ENCODE measurements at regions of chr15 and their contacts with region 1.

Region 1: GRCh38 chr15:49235446-49236124 is 65.5 kb downstream of the GALK2 start:
- DNase-seq: no peak
- ATAC-seq: peak; percentile 65
- H3K4me3 Mint-ChIP-seq: no peak overlapping the region
- H3K27ac Mint-ChIP-seq: no peak overlapping the region
- H3K4me1 Mint-ChIP-seq: peaks cover 11% of the 10 kb centered on the region
- H3K27me3 Mint-ChIP-seq: no peaks in the 10 kb centered on the region
- CTCF ChIP-seq: no peak

Region 2: DNA sequence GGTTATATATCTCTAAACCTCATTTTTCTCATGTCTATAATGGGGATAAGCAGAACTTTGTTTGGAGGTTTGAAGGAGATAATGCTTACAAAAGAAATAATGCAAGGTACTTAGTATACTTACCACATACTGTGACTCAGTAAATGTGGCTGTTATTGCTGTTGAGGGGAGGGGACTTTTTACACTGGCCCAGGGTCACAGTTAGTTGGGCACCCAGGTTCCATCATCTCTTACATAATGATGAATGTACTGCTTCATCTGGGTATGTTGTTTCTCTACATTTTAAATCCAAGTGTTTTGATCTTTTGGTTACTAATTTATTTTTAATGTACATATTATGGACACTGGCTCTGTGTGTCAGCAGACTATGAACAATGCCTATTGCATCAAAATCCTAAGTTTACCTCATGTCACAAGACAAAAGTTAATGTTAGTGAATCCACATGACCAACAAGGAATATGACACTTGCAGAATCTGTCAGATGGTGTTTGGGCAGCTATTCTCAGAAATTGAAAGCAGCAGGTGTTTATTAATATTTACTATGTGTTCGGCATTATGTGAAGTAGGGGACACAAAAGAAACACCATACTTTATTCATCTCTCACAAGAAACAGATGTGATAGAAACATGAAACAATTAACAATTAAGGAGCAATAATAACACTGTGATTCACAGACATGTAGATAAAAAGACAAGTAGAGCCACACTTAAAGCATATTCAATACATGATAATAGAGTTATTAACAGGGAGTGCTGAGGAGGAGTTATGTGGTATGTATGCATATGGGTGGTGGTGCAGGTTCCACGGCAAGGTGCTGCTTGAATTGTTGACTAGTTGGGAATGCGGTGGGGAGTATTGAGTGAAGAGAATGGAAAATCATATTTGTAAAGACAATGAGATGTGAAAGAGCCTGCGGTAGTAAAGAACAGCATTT is 44.2 kb after region 1 on chr15:
- CTCF ChIA-PET with region 1: no interaction called
- POLR2A ChIA-PET with region 1: no interaction called
- intact Hi-C with region 1: no loop called
- DNase-seq: no peak
- ATAC-seq: no peak
- H3K4me3 Mint-ChIP-seq: no peak overlapping the region
- H3K27ac Mint-ChIP-seq: no peak overlapping the region
- H3K4me1 Mint-ChIP-seq: no peaks in the 10 kb centered on the region
- H3K27me3 Mint-ChIP-seq: no peaks in the 10 kb centered on the region
- CTCF ChIP-seq: no peak

Region 3: DNA sequence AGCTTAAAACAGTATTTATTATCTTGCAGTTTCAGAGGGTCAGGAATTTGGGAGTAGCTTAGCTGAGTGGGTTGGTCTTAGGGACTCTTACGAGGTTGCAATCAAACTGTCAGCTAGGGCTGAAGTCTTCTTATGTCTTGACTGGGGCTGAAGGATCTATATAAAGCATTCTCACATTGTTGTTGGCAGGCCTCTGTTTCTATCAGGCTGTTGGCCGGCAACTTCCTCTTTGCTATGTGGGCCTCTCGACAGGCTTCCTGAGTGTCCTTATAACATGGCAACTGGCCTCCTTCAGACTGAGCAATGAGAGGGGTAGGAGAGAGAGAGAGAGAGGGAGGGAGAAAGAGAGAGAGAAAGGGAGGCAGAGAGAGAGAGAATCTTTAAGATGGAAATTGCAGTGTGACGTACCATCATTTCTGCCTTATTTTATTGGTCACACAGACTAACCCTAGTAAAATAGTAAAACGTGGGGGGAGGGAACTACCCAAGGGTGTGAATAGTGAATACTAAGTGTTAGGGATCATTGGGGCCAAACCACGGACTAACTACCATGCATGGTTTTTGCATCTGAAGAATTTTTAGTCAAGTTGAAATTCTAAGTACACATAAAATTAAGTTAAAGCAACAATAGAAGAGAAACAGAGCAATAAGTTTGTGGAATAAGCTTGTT is 203.5 kb after region 1 on chr15:
- CTCF ChIA-PET with region 1: no interaction called
- POLR2A ChIA-PET with region 1: no interaction called
- intact Hi-C with region 1: no loop called
- DNase-seq: no peak
- ATAC-seq: no peak
- H3K4me3 Mint-ChIP-seq: no peak overlapping the region
- H3K27ac Mint-ChIP-seq: no peak overlapping the region
- H3K4me1 Mint-ChIP-seq: peaks cover 15% of the 10 kb centered on the region
- H3K27me3 Mint-ChIP-seq: no peaks in the 10 kb centered on the region
- CTCF ChIP-seq: no peak

Region 4: DNA sequence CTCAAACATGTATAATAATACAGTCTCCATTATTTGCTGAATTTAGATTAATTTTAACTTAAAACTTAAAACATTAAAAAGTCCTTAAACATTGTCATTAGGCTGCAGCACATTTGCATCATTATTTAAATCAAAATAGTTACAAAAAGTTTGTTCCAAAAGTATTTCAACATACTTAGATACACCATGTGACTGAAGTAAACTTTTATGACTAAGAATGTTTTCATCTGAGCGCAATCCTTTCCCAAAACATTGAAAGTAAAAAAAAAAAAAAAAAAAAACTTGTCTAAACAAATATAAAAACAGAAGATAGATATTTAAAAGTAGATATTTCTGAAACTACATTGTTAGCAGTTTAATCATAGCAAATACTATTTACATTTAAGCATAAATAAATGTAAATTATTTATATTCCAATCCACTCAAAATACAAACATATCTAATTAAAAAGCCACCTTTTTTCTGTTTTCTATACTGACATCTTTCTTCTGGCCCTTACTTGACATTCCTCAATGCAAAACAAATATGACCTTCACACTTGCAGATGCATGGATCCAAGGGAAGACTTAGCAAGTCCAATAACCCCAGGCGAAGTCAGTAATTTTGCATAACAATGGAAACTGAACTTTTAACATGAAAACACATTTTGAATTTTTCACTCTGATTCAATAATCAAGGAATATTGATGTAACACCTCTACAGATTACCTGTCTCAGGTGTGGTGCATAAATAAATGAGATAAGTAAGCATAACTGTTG is 374.8 kb after region 1 on chr15:
- CTCF ChIA-PET with region 1: no interaction called
- POLR2A ChIA-PET with region 1: no interaction called
- intact Hi-C with region 1: loop called (anchors 5 kb)
- DNase-seq: no peak
- ATAC-seq: no peak
- H3K4me3 Mint-ChIP-seq: no peak overlapping the region
- H3K27ac Mint-ChIP-seq: no peak overlapping the region
- H3K4me1 Mint-ChIP-seq: no peaks in the 10 kb centered on the region
- H3K27me3 Mint-ChIP-seq: no peaks in the 10 kb centered on the region
- CTCF ChIP-seq: no peak

Region 5: GRCh38 chr15:50003786-50004334 is 768.3 kb after region 1 on chr15:
- CTCF ChIA-PET with region 1: interaction called, 15 read pairs
- POLR2A ChIA-PET with region 1: no interaction called
- intact Hi-C with region 1: no loop called
- DNase-seq: peak; percentile 20
- ATAC-seq: peak; percentile 88
- H3K4me3 Mint-ChIP-seq: no peak overlapping the region
- H3K27ac Mint-ChIP-seq: no peak overlapping the region
- H3K4me1 Mint-ChIP-seq: peaks cover 11% of the 10 kb centered on the region
- H3K27me3 Mint-ChIP-seq: no peaks in the 10 kb centered on the region
- CTCF ChIP-seq: no peak

Region 6: DNA sequence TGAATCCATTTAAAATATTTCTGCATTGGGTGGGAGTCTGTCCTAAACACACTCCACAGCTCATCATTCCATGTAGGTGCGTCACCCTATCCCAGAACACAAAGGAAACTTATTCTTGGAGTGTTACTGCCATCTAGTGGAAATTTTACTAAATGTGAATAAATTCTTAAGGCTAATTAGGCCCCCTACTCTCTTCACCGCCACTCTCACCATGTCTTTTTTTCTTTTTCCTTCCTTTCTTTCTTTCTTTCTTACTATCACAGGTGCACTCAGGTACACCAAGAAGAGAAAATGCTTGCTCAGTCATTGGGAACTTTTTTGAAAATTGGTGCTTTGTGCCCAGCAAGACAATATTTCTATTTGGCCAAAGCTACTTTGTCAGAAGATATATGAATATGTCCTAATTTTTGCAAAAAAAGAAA is 909.9 kb after region 1 on chr15:
- CTCF ChIA-PET with region 1: interaction called, 4 read pairs
- POLR2A ChIA-PET with region 1: no interaction called
- intact Hi-C with region 1: loop called (anchors 1 kb)
- DNase-seq: no peak
- ATAC-seq: no peak
- H3K4me3 Mint-ChIP-seq: no peak overlapping the region
- H3K27ac Mint-ChIP-seq: no peak overlapping the region
- H3K4me1 Mint-ChIP-seq: peaks cover 9% of the 10 kb centered on the region
- H3K27me3 Mint-ChIP-seq: no peaks in the 10 kb centered on the region
- CTCF ChIP-seq: no peak

Region 7: DNA sequence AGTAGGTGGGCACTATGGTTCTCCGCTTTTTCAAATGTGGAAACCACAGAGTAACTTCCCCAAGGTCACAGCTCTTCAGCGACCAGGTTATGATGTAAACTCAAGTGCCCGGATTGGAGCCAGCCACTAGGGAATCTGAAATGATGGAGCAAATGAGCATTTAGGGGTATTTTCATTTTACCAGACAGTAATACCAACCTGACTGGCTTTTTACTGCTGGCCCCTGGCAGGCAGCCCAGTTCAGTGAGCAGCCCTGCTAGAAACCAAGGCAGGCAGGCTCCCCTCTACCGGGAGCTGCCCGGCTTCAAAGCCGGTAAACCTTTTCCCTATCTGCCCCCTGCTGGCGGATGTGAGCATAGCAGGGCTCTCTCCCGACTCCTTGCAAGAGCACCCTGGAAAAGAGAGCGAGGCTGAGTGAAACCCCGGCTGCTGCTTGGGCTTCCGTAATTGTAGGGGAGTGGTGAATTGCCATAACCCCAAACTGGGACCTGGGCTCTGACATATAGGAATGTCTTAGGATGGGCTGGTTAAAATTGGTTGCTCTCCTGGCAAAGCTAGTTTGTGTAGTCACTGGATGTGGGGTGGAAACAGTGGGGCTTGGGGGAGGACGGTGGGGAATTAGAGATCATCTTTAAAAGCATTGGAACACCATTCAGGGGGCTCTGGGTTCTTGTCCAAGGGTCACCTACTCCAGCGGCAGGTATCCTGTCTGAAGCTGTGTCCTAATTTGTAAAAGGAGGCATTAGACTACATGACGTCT is 1957.1 kb after region 1 on chr15:
- CTCF ChIA-PET with region 1: no interaction called
- POLR2A ChIA-PET with region 1: no interaction called
- intact Hi-C with region 1: loop called (anchors 5 kb)
- DNase-seq: peak; percentile 57
- ATAC-seq: peak; percentile 49
- H3K4me3 Mint-ChIP-seq: no peak overlapping the region
- H3K27ac Mint-ChIP-seq: no peak overlapping the region
- H3K4me1 Mint-ChIP-seq: no peaks in the 10 kb centered on the region
- H3K27me3 Mint-ChIP-seq: peaks cover 37% of the 10 kb centered on the region
- CTCF ChIP-seq: peak; percentile 78

Measured in activated B cell treated with CpG ODN at 0.5 μM for 24 hours (primary cell).